ENCODE measurements at regions of chr1 and their contacts with region 1.

Region 1: DNA sequence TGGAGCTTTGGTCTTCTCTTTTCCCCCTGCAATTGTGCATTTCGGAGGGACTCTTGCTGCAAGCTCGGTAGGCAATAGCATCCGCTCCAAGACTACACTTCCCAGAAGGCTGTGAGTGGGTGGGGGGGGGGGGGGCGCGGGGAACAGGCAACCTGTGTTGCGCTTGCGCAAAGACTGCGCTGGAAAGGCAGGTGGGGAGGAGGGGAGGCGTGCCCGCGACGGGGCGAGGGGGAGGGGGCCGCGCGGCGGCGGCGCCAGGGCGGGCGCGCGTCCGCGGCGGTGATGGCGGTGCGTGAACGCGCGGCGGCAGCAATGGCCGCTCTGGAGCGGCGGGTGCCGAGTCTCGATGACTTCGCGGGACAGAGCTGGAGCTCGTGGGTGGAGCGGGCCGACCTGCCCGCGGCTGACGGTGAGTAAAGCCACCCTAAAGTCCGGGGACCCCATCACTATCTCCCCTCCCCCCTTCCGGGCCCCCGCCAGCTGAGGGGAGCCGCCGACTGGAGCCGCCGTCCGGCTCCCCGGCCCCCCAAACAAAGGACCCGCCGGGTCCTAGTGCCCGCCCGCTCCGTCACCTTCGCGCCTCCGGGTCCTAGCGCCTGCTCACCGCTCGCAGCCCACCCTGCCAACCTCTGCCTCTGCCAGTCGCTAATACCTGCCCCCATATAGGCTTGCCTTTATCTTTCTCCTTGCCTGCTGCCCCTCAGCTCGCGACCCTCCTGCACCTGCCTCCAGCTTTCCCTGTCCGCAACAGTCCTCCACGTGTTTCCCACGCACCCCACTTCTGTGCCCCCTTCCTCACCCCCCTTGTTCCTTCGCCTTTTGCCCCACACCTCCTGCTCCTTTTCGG is at the start of gene ATXN7L2:
- DNase-seq: peak; percentile 84
- ATAC-seq: peak; percentile 84
- H3K4me3 ChIP-seq: peak within 1 kb of the TSS; percentile 75 to 92 (median 78)
- H3K27ac ChIP-seq: peak within 1 kb of the TSS; percentile 83
- H3K4me1 ChIP-seq: peaks cover 19% of the 10 kb centered on the region
- H3K27me3 ChIP-seq: peaks cover 1 to 17% of the 10 kb centered on the region in 2 experiments; a peak in 4 of 5 replicates
- CTCF ChIP-seq: no peak
- EP300 ChIP-seq: 0 out of 4 replicates have a peak, but pooled peaks of 1 of the 2 experiments have one; percentile 18
- POLR2A ChIP-seq: peak; percentile 79 to 92
- RAD21 ChIP-seq: peak; percentile 47; the same call in 1 of the 2 replicates
- total RNA-seq, gene ATXN7L2: 1.3 and 2.7 TPM in 2 replicates

Region 2: DNA sequence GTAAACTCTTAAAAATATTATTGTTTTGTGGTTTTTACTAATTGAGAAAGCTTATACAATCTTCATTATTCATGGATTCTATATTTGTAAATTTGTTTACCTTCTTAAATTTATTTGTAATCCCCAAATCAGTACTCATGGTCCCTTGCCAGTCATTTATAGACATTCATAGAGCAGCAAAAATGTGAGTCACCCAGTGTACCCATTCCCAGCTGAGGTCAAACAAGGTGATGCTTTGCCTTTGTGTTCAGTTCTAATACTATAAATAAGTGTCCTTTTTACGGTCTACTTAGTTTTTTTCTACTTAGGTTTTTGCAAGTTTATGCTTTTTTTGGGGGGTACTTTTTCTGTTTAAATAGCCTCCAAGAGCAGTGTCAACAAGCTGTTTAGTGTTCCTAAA is 122.2 kb before region 1 on chr1:
- CTCF ChIA-PET with region 1: no interaction called
- POLR2A ChIA-PET with region 1: no interaction called
- in situ Hi-C with region 1: no loop called
- intact Hi-C with region 1: no loop called
- DNase-seq: no peak
- ATAC-seq: no peak
- H3K4me3 ChIP-seq: no peak overlapping the region
- H3K27ac ChIP-seq: no peak overlapping the region
- H3K4me1 ChIP-seq: peaks cover 29% of the 10 kb centered on the region
- H3K27me3 ChIP-seq: no peaks in the 10 kb centered on the region
- CTCF ChIP-seq: no peak
- EP300 ChIP-seq: no peak
- POLR2A ChIP-seq: no peak
- RAD21 ChIP-seq: no peak

Region 3: GRCh38 chr1:109385417-109385816 is 98.5 kb before region 1 on chr1:
- CTCF ChIA-PET with region 1: no interaction called
- POLR2A ChIA-PET with region 1: no interaction called
- in situ Hi-C with region 1: no loop called
- intact Hi-C with region 1: no loop called
- DNase-seq: no peak
- ATAC-seq: no peak
- H3K4me3 ChIP-seq: no peak overlapping the region
- H3K27ac ChIP-seq: no peak overlapping the region
- H3K4me1 ChIP-seq: peaks cover 93% of the 10 kb centered on the region
- H3K27me3 ChIP-seq: no peaks in the 10 kb centered on the region
- CTCF ChIP-seq: no peak
- EP300 ChIP-seq: no peak
- POLR2A ChIP-seq: no peak
- RAD21 ChIP-seq: no peak

Region 4: DNA sequence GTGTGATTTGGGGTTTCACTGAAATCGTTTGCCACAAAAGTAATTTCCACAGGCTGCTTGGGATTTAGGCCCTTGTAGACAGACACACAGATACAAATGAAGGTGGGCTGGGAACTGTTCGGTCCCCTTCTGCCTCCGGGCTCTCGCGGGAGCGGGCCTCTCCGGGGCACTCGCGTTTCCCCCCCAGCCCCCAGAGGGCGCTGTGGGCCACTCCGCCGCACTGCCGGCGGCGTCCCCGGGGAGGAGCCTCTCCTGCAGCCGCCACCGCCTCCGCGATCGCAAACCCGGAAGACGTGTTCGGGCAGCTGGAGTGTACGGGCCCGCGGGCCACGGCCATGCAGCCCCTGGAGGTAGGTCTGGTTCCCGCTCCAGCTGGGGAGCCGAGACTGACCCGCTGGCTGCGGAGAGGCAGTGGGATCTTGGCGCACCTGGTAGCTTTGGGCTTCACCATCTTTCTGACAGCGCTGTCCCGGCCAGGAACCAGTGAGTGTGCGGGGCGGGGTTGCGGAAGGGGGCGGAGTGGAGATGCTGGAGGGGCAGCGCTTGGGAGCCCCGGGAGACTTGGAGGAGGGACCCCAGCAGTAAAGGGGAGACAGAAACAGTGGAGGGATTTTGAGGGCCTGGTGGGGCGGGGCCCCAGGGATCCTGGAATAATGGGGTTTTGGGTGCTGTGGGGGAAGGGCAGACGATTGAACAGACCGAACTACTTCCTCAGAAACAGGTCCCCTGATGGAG is 10.1 kb after region 1 on chr1 and contains the start of gene CYB561D1:
- CTCF ChIA-PET with region 1: no interaction called
- POLR2A ChIA-PET with region 1: interaction called, 10 read pairs
- in situ Hi-C with region 1: no loop called
- intact Hi-C with region 1: no loop called
- DNase-seq: peak; percentile 74
- ATAC-seq: peak; percentile 91
- H3K4me3 ChIP-seq: peak within 1 kb of the TSS; percentile 91 to 98 (median 95)
- H3K27ac ChIP-seq: peak within 1 kb of the TSS; percentile 40
- H3K4me1 ChIP-seq: peaks cover 18% of the 10 kb centered on the region
- H3K27me3 ChIP-seq: no peaks in the 10 kb centered on the region
- CTCF ChIP-seq: peak; percentile 95
- EP300 ChIP-seq: no peak
- POLR2A ChIP-seq: peak; percentile 61 to 87; a peak in 3 of 4 replicates
- RAD21 ChIP-seq: peak; percentile 86
- total RNA-seq, gene CYB561D1: 3.9 and 4.1 TPM in 2 replicates